ENCODE measurements at regions of chr1 and their contacts with region 1.

Region 1: GRCh38 chr1:207404849-207405525 is 49.1 kb upstream of the CR2 start:
- DNase-seq: peak in 4 of 5 donors; percentile 52 to 63 (median 56)
- H3K4me3 ChIP-seq: no peak overlapping the region
- H3K4me3 Mint-ChIP-seq: no peak overlapping the region
- H3K27ac ChIP-seq: no peak overlapping the region
- H3K27ac Mint-ChIP-seq: no peak overlapping the region
- H3K4me1 ChIP-seq: no peaks in the 10 kb centered on the region
- H3K4me1 Mint-ChIP-seq: no peaks in the 10 kb centered on the region
- H3K27me3 ChIP-seq: no peaks in the 10 kb centered on the region
- H3K27me3 Mint-ChIP-seq: peaks cover 3 to 7% of the 10 kb centered on the region in 2 donors

Region 2: DNA sequence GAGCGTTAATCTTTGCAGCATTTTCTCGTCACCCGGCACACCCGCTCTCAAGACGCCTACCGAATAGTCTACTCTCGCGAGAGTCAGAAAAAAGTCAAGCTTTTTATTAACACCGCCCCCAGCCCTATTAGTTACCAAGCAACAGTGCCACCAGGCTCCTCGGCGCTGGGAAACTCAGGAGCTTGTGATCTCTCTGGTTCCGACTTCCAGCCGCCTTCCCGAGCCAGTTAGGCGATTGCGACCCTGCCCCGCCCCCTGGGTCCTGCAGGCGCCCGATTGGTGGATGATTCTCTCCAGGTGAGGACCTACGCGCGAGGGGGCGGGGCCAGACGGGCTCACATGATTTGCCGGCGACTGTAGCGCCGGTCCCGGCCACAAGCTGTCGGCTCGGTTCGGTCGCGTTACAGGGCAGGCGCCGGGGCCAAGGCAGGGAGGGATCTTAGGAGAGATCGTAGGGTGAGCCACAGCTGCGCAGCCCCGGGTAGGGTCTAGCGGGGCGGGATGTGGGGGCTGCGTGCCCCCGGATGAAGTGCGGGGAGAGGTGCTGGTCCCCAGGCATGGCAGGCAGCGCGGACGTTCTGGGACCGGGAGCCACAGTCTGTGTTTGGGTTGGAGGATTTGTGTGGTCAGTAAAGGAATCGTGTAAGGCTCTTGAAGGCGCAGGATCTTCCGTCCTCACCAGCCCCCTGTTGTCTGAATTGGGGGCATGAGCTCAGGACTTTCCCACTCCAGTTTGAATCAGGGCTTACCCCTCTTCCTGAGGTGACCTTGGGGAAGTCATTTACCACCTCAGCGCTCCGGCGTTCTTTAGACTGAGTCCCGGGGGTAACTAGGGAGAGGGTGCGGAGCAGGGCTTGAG is 351.8 kb before region 1 on chr1 and contains the start of gene PFKFB2:
- CTCF ChIA-PET with region 1: interaction called, 7 read pairs
- POLR2A ChIA-PET with region 1: interaction called, 3 read pairs
- intact Hi-C with region 1: loop called (anchors 1 kb)
- DNase-seq: peak; percentile 93 to 96 (median 95)
- H3K4me3 ChIP-seq: peak within 1 kb of the TSS; percentile 59 to 75
- H3K4me3 Mint-ChIP-seq: peak within 1 kb of the TSS; percentile 94 to 100 (median 98)
- H3K27ac ChIP-seq: peak within 1 kb of the TSS; percentile 52
- H3K27ac Mint-ChIP-seq: peak within 1 kb of the TSS; percentile 89 to 99 (median 95)
- H3K4me1 ChIP-seq: peaks cover 33% of the 10 kb centered on the region
- H3K4me1 Mint-ChIP-seq: peaks cover 25 to 58% (median 42%) of the 10 kb centered on the region in 4 donors
- H3K27me3 ChIP-seq: no peaks in the 10 kb centered on the region
- H3K27me3 Mint-ChIP-seq: peaks cover 0 to 2% of the 10 kb centered on the region in 2 donors
- total RNA-seq, gene PFKFB2: 1.4 to 1.9 TPM

Region 3: DNA sequence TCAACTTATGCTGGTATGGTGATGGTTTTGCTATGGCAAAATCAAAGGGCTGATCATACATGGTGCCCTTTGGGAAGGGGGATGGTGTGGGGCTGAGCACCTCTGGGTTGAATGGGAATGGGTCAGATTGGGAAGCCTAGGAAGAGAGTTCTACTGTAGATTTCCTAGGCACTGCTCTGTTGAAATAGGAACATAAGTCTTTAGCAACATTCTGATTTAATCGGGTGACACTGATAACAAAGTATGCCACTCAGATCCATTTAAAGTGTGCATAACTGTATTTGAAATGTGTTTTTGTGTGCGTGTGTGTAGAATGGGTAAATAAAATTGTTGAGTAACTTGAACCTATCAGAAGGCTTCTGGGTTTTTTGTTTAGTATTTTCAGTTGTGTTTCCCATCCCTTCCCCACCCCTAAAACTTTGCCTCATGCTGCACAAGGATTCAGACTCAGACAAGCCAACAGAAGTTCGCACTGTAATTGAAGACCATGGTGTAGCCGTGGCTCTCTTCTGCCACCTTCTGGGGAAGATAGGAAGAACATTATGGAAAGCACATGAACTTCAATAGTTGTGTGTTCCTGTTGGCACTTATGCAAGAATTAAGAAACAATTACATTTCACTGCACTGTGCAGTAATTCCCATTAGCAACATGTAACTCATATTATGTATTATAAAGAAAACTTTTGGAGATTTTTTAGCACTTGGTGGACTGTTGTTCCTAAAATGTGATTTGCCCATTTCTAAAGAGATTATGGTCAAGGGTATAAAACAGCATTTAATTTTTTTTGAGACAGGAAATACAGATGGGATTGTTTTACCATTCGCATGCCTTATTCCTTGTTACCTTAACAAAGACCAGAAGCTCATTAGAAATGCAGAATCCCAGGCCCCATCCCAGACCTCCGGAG is 327.3 kb before region 1 on chr1:
- CTCF ChIA-PET with region 1: interaction called, 142 read pairs
- POLR2A ChIA-PET with region 1: no interaction called
- intact Hi-C with region 1: no loop called
- DNase-seq: peak; percentile 69 to 75 (median 72)
- H3K4me3 ChIP-seq: no peak overlapping the region
- H3K4me3 Mint-ChIP-seq: no peak overlapping the region
- H3K27ac ChIP-seq: no peak overlapping the region
- H3K27ac Mint-ChIP-seq: no peak overlapping the region
- H3K4me1 ChIP-seq: no peaks in the 10 kb centered on the region
- H3K4me1 Mint-ChIP-seq: peaks cover 0 to 2% (median under 1%) of the 10 kb centered on the region in 4 donors
- H3K27me3 ChIP-seq: no peaks in the 10 kb centered on the region
- H3K27me3 Mint-ChIP-seq: peaks cover 7 to 11% of the 10 kb centered on the region in 2 donors

Region 4: GRCh38 chr1:207084701-207085180 is 320.2 kb before region 1 on chr1:
- CTCF ChIA-PET with region 1: interaction called, 142 read pairs
- POLR2A ChIA-PET with region 1: interaction called, 5 read pairs
- intact Hi-C with region 1: loop called (anchors 1 kb)
- DNase-seq: peak; percentile 53 to 62 (median 58)
- H3K4me3 ChIP-seq: no peak overlapping the region
- H3K4me3 Mint-ChIP-seq: no peak overlapping the region
- H3K27ac ChIP-seq: no peak overlapping the region
- H3K27ac Mint-ChIP-seq: peak overlapping the region in 2 of 7 donors; percentile 17 to 25
- H3K4me1 ChIP-seq: no peaks in the 10 kb centered on the region
- H3K4me1 Mint-ChIP-seq: peaks cover 6 to 11% (median 9%) of the 10 kb centered on the region in 4 donors
- H3K27me3 ChIP-seq: no peaks in the 10 kb centered on the region
- H3K27me3 Mint-ChIP-seq: peaks cover 6 to 17% of the 10 kb centered on the region in 2 donors

Region 5: DNA sequence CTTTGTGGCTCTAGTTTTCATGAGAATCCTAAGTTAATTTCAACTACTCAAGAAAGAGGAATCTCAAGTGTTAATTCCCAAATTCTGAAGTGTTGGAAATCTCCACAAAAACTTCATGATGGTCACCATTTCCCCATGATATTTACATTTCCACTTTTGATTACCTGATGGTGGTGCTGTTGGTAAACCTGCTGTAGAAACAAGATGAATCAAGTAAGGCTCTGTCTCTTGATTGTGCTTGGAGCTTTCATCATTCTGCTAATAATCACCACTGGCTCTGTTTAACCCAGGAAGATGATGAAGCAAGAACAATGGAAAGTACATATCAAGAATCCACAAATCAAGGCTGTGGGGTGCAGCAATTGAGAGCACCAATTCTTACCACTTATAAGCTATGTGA is 223.1 kb before region 1 on chr1:
- CTCF ChIA-PET with region 1: interaction called, 46 read pairs
- POLR2A ChIA-PET with region 1: no interaction called
- intact Hi-C with region 1: loop called (anchors 1 kb)
- DNase-seq: peak in 4 of 5 donors; percentile 2 to 25 (median 8)
- H3K4me3 ChIP-seq: no peak overlapping the region
- H3K4me3 Mint-ChIP-seq: no peak overlapping the region
- H3K27ac ChIP-seq: no peak overlapping the region
- H3K27ac Mint-ChIP-seq: no peak overlapping the region
- H3K4me1 ChIP-seq: no peaks in the 10 kb centered on the region
- H3K4me1 Mint-ChIP-seq: peaks cover 0 to 4% (median 0%) of the 10 kb centered on the region in 4 donors
- H3K27me3 ChIP-seq: no peaks in the 10 kb centered on the region
- H3K27me3 Mint-ChIP-seq: peaks cover 6 to 13% of the 10 kb centered on the region in 2 donors

Region 6: GRCh38 chr1:207499573-207499972 is 94.6 kb after region 1 on chr1:
- CTCF ChIA-PET with region 1: interaction called, 34 read pairs
- POLR2A ChIA-PET with region 1: interaction called, 5 read pairs
- intact Hi-C with region 1: loop called (anchors 1 kb)
- DNase-seq: peak; percentile 62 to 68 (median 64)
- H3K4me3 ChIP-seq: no peak overlapping the region
- H3K4me3 Mint-ChIP-seq: no peak overlapping the region
- H3K27ac ChIP-seq: no peak overlapping the region
- H3K27ac Mint-ChIP-seq: no peak overlapping the region
- H3K4me1 ChIP-seq: peaks cover 6% of the 10 kb centered on the region
- H3K4me1 Mint-ChIP-seq: peaks cover 5 to 13% (median 11%) of the 10 kb centered on the region in 4 donors
- H3K27me3 ChIP-seq: peaks cover 6% of the 10 kb centered on the region
- H3K27me3 Mint-ChIP-seq: peaks cover 19 to 30% of the 10 kb centered on the region in 2 donors

Region 7: DNA sequence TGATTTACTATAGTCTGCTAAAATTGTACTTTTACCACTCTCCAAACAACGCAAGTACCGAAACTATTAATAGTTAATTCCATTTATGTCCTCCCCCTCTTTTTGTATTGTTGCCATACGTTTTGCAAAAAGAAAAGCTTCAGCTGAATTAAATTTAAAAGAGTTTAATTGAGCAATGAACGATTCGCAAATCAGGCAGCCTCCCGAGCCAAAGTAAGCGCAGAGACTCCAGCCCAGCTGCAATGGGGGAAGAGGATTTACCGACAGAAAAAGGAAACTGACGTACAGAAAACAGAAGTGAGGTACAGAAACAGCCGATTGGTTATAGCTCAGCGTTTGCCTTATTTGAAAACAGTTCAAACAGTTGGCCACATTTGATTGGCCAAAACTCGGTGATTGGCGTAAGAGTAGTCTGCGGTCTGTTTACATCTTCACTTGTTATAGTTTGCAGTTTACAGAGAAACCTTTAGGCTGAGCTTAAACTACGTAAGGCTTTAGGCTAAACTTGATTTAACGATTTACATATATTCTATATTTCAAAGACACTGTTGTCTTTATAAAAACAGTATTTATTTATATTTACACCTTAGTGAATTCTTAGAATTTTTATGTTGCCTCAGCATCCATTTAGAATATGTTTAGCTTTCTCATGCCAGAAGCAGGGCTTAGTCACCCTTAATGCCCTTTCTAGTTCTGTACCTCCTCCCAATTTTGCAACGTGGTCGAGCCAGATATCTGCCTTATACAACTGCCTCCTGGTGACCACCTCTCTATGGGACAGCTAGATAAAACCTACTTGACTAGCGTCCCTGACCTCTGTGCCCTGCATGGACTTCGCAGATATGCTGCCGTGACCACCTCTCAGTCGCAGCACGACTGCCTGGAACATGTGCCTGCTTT is 114.8 kb after region 1 on chr1:
- CTCF ChIA-PET with region 1: no interaction called
- POLR2A ChIA-PET with region 1: no interaction called
- intact Hi-C with region 1: no loop called
- DNase-seq: no peak
- H3K4me3 ChIP-seq: no peak overlapping the region
- H3K4me3 Mint-ChIP-seq: no peak overlapping the region
- H3K27ac ChIP-seq: no peak overlapping the region
- H3K27ac Mint-ChIP-seq: no peak overlapping the region
- H3K4me1 ChIP-seq: no peaks in the 10 kb centered on the region
- H3K4me1 Mint-ChIP-seq: no peaks in the 10 kb centered on the region
- H3K27me3 ChIP-seq: no peaks in the 10 kb centered on the region
- H3K27me3 Mint-ChIP-seq: peaks cover 4 to 8% of the 10 kb centered on the region in 2 donors